GM10248 (cell line): ENCODE measurements at regions of chr9 and their contacts with region 1.

Region 1: GRCh38 chr9:124617471-124618141 is 110.4 kb upstream of the NR5A1 start:
- DNase-seq: peak; percentile 72
- CTCF ChIP-seq: peak; percentile 90

Region 2: GRCh38 chr9:124602204-124602603 is 15.4 kb before region 1 on chr9:
- CTCF ChIA-PET with region 1: interaction called, 71 read pairs
- POLR2A ChIA-PET with region 1: no interaction called
- DNase-seq: no peak
- CTCF ChIP-seq: no peak

Region 3: DNA sequence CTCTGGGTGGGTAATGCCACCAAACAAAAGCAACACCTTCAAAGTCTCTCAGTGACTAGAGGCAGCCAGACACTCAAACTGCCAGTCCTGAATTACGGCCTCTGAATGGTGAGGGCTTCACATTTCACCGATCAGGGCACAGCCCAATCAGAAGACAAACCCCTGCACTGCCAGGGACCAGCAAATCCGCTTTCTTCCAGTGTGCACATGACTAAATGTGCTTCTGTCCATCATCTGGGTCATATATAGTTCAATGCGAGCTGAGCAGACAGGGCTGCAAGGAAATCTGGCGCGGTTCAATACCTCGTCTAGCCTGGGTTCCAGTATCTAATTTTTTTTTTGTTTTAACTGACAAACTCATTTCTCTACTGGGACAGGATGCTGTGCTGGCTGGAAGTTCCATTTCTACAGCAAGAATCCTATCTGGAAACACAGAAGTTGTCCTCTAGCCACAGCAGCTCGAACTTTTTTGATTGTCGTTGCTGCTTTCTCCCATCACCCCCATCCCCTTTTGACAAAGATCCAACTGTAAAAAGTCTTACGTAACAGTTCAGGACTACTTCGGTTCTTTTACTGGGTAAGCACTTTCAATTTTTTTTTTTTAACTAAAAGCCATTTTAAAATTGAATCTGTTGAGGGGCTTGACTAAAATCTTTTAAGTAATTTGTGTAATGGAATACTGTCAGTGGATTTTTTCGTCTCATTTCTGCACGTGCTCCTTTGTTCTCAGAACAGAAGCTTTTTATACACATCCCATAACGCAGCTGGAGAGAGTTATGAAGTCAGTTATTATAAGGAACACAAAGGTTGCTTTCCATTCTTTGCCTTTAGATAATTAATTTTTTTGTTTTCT is 40.8 kb after region 1 on chr9:
- CTCF ChIA-PET with region 1: interaction called, 32 read pairs
- POLR2A ChIA-PET with region 1: no interaction called
- DNase-seq: peak; percentile 72
- CTCF ChIP-seq: no peak

Region 4: GRCh38 chr9:124684169-124684568 is 66.6 kb after region 1 on chr9:
- CTCF ChIA-PET with region 1: interaction called, 13 read pairs
- POLR2A ChIA-PET with region 1: no interaction called
- DNase-seq: no peak
- CTCF ChIP-seq: no peak

Region 5: GRCh38 chr9:125003332-125003731 is 385.7 kb after region 1 on chr9:
- CTCF ChIA-PET with region 1: no interaction called
- POLR2A ChIA-PET with region 1: no interaction called
- DNase-seq: no peak
- CTCF ChIP-seq: no peak